Sigmoid colon (tissue), 7 donors: ENCODE measurements at regions of chr12 and their contacts with region 1.

Region 1: DNA sequence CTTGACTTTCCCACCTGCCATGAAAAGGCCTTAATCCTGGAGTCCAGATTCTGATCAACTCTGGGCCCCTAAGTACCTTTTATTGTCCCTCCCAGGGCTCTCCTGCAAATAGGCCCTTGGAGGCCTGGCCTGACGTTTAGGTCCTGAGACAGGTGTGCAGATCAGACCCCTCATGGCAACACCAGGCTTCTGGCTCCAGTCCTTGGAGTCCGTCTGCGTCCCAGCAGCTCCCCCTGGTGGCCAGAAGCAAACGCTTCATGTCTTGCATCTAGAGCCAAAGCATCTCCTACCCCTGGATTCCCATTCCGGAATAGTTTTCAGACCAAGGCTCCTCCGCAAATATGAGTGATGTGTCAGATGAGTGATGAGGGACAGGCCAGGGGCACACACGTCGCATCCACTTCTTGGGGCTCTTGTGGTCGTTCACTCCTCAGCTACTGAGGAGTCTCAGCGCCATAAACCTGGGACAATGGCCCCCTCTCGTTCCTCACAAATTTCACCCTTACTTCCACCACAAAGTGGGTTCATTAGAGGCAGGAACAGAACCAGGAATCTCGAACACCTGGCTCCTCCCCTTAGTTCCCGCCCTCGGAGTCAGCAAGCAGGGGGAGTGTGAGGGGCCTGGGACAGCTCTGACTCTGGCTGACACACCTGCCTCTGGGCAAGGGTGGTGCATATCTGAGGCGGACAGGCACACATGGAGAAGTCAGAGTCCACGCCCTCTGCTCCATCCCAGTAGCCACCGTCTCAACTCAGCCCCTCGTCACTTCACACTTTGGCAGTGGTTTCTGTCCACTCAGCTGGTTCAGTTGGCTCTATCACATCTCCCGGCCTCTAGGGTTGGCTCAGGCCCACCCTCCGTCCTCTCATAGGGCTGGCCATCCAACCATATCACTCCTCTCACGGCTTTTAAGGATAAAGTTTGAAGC is 77.9 kb upstream of the PWP1 start:
- DNase-seq: peak; percentile 83
- H3K4me3 ChIP-seq: no peak overlapping the region
- H3K27ac ChIP-seq: no peak overlapping the region
- H3K4me1 ChIP-seq: no peaks in the 10 kb centered on the region
- H3K27me3 ChIP-seq: peaks cover 0 to 3% (median 0%) of the 10 kb centered on the region in 3 donors
- CTCF ChIP-seq: peak; percentile 51 to 91 (median 78)
- EP300 ChIP-seq: no peak
- POLR2A ChIP-seq: no peak

Region 2: DNA sequence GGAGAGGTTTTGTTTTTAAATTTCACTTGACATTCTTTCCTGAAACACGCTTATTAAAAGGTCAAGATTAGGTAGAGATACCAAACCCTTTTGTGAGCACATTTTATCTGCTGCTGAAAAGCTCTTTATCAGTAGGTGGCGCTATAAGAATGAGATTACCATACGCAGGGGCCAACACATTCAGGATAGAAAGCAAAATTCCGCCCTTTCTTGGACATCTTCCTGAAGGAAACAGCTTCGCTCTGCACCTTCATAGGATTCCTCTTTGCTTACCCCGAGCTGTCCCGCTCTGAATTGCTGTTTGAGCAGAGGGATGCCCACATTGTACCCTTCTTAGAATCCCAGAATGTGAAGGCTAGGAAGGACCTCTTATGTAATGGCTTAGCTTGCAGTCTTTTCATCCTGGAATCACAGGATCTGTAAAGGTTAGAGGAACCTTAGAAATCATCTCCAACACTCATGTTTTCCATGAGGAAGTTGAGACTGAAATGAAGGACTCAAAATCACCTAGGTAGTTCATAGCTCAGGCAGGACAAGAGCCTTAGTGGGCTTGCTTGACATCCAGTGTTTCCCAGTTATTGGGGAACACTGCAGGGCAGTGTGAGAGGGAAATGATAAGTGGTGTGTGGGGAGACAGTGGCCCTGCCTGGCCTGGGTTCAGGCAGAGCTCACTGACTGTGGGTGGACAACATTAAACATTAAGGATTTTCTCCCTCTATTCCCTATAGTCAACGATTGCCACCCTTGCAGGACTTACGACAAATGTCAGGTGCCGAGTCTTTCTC is 475.7 kb before region 1 on chr12:
- intact Hi-C with region 1: loop called (anchors 1 kb)
- DNase-seq: no peak
- H3K4me3 ChIP-seq: no peak overlapping the region
- H3K27ac ChIP-seq: no peak overlapping the region
- H3K4me1 ChIP-seq: no peaks in the 10 kb centered on the region
- H3K27me3 ChIP-seq: no peaks in the 10 kb centered on the region
- CTCF ChIP-seq: peak; percentile 31 to 75 (median 68)
- EP300 ChIP-seq: no peak
- POLR2A ChIP-seq: no peak

Region 3: GRCh38 chr12:107317751-107318613 is 289.7 kb before region 1 on chr12:
- intact Hi-C with region 1: no loop called
- DNase-seq: no peak
- H3K4me3 ChIP-seq: peak overlapping the region in 3 of 4 donors; percentile 19 to 54 (median 49)
- H3K27ac ChIP-seq: peak overlapping the region in 1 of 4 donors; percentile 56
- H3K4me1 ChIP-seq: peaks cover 0 to 40% (median 29%) of the 10 kb centered on the region in 4 donors
- H3K27me3 ChIP-seq: peaks cover 21 to 57% (median 56%) of the 10 kb centered on the region in 3 donors
- CTCF ChIP-seq: peak in 1 of 4 experiments; percentile 21
- EP300 ChIP-seq: no peak
- POLR2A ChIP-seq: no peak

Region 4: GRCh38 chr12:107564946-107565345 is 42.8 kb before region 1 on chr12:
- intact Hi-C with region 1: no loop called
- DNase-seq: no peak
- H3K4me3 ChIP-seq: no peak overlapping the region
- H3K27ac ChIP-seq: no peak overlapping the region
- H3K4me1 ChIP-seq: no peaks in the 10 kb centered on the region
- H3K27me3 ChIP-seq: no peaks in the 10 kb centered on the region
- CTCF ChIP-seq: no peak
- EP300 ChIP-seq: no peak
- POLR2A ChIP-seq: no peak